Posterior vena cava (tissue), 2 donors: ENCODE measurements at regions of chr21 and their contacts with region 1.

Region 1: GRCh38 chr21:34745557-34746255 is 76.9 kb downstream of the CLIC6 start:
- DNase-seq: peak; percentile 93

Region 2: GRCh38 chr21:34603002-34603709 is 142.6 kb before region 1 on chr21:
- intact Hi-C with region 1: no loop called
- DNase-seq: peak; percentile 94

Region 3: DNA sequence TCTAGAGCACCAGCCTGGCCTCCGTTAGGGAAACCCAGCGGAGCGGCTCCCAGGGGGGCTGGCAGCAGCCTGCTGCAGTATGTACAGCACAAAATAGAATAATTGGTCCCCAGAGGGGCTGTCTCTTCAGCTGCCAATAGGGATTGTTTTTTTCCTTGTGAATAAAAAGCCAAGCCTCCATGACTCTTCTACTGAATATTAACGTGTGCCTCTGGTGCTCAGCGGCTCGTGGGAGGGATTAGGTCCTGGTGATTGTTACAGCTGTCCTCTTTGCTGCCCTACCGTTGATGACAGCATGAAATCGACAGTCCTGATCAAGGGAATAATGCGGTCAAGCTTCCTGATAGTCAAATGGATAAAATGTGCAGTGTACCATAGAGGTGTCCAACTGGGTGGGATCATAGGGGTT is 494.1 kb after region 1 on chr21:
- intact Hi-C with region 1: loop called in 1 of 2 experiments (anchors 10 kb)
- DNase-seq: no peak

Region 4: GRCh38 chr21:36028127-36029069 is 1282.7 kb after region 1 on chr21:
- intact Hi-C with region 1: loop called in 1 of 2 experiments (anchors 10 kb)
- DNase-seq: peak; percentile 92